Activated CD4-positive, alpha-beta memory T cell treated with anti-CD3 and anti-CD28 coated beads, Interleukin-2, amount 10 ng/mL, durations not matched to agents 7 days and 5 days (primary cell): ENCODE measurements at regions of chr11 and their contacts with region 1.

Region 1: GRCh38 chr11:123246749-123247495 is 51.9 kb upstream of the CLMP start:
- DNase-seq: peak; percentile 86
- H3K4me3 Mint-ChIP-seq: no peak overlapping the region
- H3K27ac Mint-ChIP-seq: no peak overlapping the region
- H3K4me1 Mint-ChIP-seq: peaks cover 10% of the 10 kb centered on the region
- H3K27me3 Mint-ChIP-seq: peaks cover 30% of the 10 kb centered on the region

Region 2: GRCh38 chr11:123054301-123055065 is 192.4 kb before region 1 on chr11:
- CTCF ChIA-PET with region 1: interaction called, 12 read pairs
- POLR2A ChIA-PET with region 1: interaction called, 3 read pairs
- DNase-seq: no peak
- H3K4me3 Mint-ChIP-seq: no peak overlapping the region
- H3K27ac Mint-ChIP-seq: peak overlapping the region; percentile 67
- H3K4me1 Mint-ChIP-seq: peaks cover 54% of the 10 kb centered on the region
- H3K27me3 Mint-ChIP-seq: no peaks in the 10 kb centered on the region

Region 3: GRCh38 chr11:123091506-123091905 is 155.4 kb before region 1 on chr11:
- CTCF ChIA-PET with region 1: interaction called, 11 read pairs
- POLR2A ChIA-PET with region 1: no interaction called
- DNase-seq: no peak
- H3K4me3 Mint-ChIP-seq: no peak overlapping the region
- H3K27ac Mint-ChIP-seq: no peak overlapping the region
- H3K4me1 Mint-ChIP-seq: peaks cover 23% of the 10 kb centered on the region
- H3K27me3 Mint-ChIP-seq: no peaks in the 10 kb centered on the region

Region 4: DNA sequence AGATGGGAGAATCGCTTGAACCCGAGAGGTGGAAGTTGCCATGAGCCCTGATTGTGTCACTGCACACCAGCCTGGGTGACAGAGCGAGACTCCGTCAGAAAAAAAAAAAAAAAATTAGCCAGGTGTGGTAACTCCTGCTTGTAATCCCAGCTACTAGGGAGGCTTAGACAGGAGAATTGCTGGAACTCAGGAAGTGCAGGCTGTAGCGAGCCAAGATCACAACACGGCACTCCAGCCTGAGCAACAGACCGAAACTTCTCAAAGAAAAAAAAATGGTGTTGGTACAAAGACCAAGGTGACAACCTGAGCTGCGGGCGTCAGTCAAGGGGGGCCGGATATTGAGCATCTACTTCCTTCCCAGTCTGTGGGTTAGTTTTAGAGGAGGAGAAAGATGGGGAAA is 136.6 kb before region 1 on chr11:
- CTCF ChIA-PET with region 1: interaction called, 154 read pairs
- POLR2A ChIA-PET with region 1: interaction called, 6 read pairs
- DNase-seq: no peak
- H3K4me3 Mint-ChIP-seq: no peak overlapping the region
- H3K27ac Mint-ChIP-seq: no peak overlapping the region
- H3K4me1 Mint-ChIP-seq: peaks cover 6% of the 10 kb centered on the region
- H3K27me3 Mint-ChIP-seq: peaks cover 9% of the 10 kb centered on the region

Region 5: DNA sequence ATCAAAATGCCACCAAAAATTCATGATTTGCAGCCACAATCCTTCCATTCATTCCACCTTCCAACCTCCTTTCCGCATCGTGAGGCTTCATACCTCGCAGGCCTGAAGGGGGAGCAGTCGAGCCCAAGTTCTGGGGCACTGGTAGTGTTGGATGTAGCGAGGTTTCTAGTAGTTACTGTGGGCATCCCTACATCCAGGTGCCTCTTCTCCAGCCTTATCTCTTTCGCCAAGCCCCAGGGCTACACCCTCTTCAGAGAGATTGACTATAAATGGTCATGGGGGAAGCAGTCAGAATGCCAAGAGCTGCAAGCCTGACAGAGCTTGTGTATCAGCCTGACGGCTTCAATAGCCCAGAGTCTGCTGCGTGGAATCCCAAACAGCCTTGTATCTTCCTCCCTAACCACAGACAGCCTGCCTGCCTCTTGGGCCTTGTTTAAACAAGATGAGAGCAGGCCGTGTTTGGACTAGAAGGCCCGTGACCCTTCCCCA is 80.8 kb before region 1 on chr11:
- CTCF ChIA-PET with region 1: interaction called, 43 read pairs
- POLR2A ChIA-PET with region 1: no interaction called
- DNase-seq: peak; percentile 30
- H3K4me3 Mint-ChIP-seq: no peak overlapping the region
- H3K27ac Mint-ChIP-seq: no peak overlapping the region
- H3K4me1 Mint-ChIP-seq: no peaks in the 10 kb centered on the region
- H3K27me3 Mint-ChIP-seq: peaks cover 2% of the 10 kb centered on the region

Region 6: GRCh38 chr11:123261345-123262106 is 14.6 kb after region 1 on chr11:
- CTCF ChIA-PET with region 1: interaction called, 33 read pairs
- POLR2A ChIA-PET with region 1: no interaction called
- DNase-seq: peak; percentile 73
- H3K4me3 Mint-ChIP-seq: no peak overlapping the region
- H3K27ac Mint-ChIP-seq: no peak overlapping the region
- H3K4me1 Mint-ChIP-seq: peaks cover 17% of the 10 kb centered on the region
- H3K27me3 Mint-ChIP-seq: peaks cover 27% of the 10 kb centered on the region

Region 7: GRCh38 chr11:123443851-123444598 is 197.1 kb after region 1 on chr11:
- CTCF ChIA-PET with region 1: no interaction called
- POLR2A ChIA-PET with region 1: no interaction called
- DNase-seq: no peak
- H3K4me3 Mint-ChIP-seq: no peak overlapping the region
- H3K27ac Mint-ChIP-seq: peak overlapping the region; percentile 56
- H3K4me1 Mint-ChIP-seq: peaks cover 91% of the 10 kb centered on the region
- H3K27me3 Mint-ChIP-seq: no peaks in the 10 kb centered on the region